Panc1 (cell line): ENCODE measurements at regions of chr19 and their contacts with region 1.

Region 1: GRCh38 chr19:56105090-56105701 is 15.9 kb downstream of the ZNF787 start:
- DNase-seq: no peak
- ATAC-seq: peak; percentile 85
- H3K4me3 ChIP-seq: peak overlapping the region; percentile 41 to 56
- H3K27ac ChIP-seq: peak overlapping the region; percentile 97
- H3K4me1 ChIP-seq: peaks cover 60% of the 10 kb centered on the region
- H3K27me3 ChIP-seq: no peaks in the 10 kb centered on the region
- CTCF ChIP-seq: peak; percentile 95

Region 2: DNA sequence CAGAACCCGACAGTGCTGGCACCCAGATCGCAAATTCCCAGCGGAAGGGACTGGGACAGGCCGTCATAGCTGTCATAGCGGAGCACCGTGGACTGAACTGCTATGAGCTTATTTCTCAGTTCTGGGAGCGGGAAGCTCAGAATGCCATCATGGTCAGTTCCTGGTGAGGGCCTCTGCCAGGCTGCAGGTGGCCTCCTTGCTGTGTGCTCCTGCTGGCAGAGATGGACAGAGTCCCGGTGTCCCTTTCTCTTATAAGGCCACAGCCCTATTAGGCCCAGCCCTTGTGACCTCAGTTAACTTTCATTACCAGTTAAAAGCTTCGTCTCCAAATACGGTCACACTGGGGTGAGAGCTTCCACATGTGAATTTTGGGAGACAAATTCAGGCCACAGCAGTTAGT is 40.5 kb after region 1 on chr19:
- CTCF ChIA-PET with region 1: no interaction called
- POLR2A ChIA-PET with region 1: no interaction called
- in situ Hi-C with region 1: no loop called
- intact Hi-C with region 1: no loop called
- DNase-seq: no peak
- ATAC-seq: no peak
- H3K4me3 ChIP-seq: no peak overlapping the region
- H3K27ac ChIP-seq: no peak overlapping the region
- H3K4me1 ChIP-seq: peaks cover 17% of the 10 kb centered on the region
- H3K27me3 ChIP-seq: no peaks in the 10 kb centered on the region
- CTCF ChIP-seq: no peak

Region 3: GRCh38 chr19:56162258-56162657 is 57.1 kb after region 1 on chr19:
- CTCF ChIA-PET with region 1: interaction called, 13 read pairs
- POLR2A ChIA-PET with region 1: no interaction called
- in situ Hi-C with region 1: no loop called
- intact Hi-C with region 1: no loop called
- DNase-seq: no peak
- ATAC-seq: peak; percentile 52; the same call in 1 of the 2 replicates
- H3K4me3 ChIP-seq: no peak overlapping the region
- H3K27ac ChIP-seq: no peak overlapping the region
- H3K4me1 ChIP-seq: no peaks in the 10 kb centered on the region
- H3K27me3 ChIP-seq: no peaks in the 10 kb centered on the region
- CTCF ChIP-seq: no peak